Sigmoid colon (tissue), 7 donors: ENCODE measurements at regions of chr11 and their contacts with region 1.

Region 1: GRCh38 chr11:92269021-92269420 is 44.4 kb downstream of the FAT3 start:
- DNase-seq: no peak
- H3K4me3 ChIP-seq: no peak overlapping the region
- H3K27ac ChIP-seq: no peak overlapping the region
- H3K4me1 ChIP-seq: peaks cover 0 to 7% (median 3%) of the 10 kb centered on the region in 4 donors
- H3K27me3 ChIP-seq: no peaks in the 10 kb centered on the region
- CTCF ChIP-seq: no peak
- EP300 ChIP-seq: no peak
- POLR2A ChIP-seq: no peak

Region 2: GRCh38 chr11:92524542-92524941 is 255.5 kb after region 1 on chr11:
- intact Hi-C with region 1: no loop called
- DNase-seq: no peak
- H3K4me3 ChIP-seq: no peak overlapping the region
- H3K27ac ChIP-seq: no peak overlapping the region
- H3K4me1 ChIP-seq: peaks cover 0 to 4% (median 0%) of the 10 kb centered on the region in 4 donors
- H3K27me3 ChIP-seq: no peaks in the 10 kb centered on the region
- CTCF ChIP-seq: no peak
- EP300 ChIP-seq: no peak
- POLR2A ChIP-seq: no peak

Region 3: GRCh38 chr11:93817426-93818348 is 1548.7 kb after region 1 on chr11:
- intact Hi-C with region 1: loop called (anchors 10 kb)
- DNase-seq: no peak
- H3K4me3 ChIP-seq: no peak overlapping the region
- H3K27ac ChIP-seq: no peak overlapping the region
- H3K4me1 ChIP-seq: peaks cover 0 to 35% (median 10%) of the 10 kb centered on the region in 4 donors
- H3K27me3 ChIP-seq: no peaks in the 10 kb centered on the region
- CTCF ChIP-seq: no peak
- EP300 ChIP-seq: no peak
- POLR2A ChIP-seq: no peak